OCI-LY7 (cell line): ENCODE measurements at regions of chr7 and their contacts with region 1.

Region 1: DNA sequence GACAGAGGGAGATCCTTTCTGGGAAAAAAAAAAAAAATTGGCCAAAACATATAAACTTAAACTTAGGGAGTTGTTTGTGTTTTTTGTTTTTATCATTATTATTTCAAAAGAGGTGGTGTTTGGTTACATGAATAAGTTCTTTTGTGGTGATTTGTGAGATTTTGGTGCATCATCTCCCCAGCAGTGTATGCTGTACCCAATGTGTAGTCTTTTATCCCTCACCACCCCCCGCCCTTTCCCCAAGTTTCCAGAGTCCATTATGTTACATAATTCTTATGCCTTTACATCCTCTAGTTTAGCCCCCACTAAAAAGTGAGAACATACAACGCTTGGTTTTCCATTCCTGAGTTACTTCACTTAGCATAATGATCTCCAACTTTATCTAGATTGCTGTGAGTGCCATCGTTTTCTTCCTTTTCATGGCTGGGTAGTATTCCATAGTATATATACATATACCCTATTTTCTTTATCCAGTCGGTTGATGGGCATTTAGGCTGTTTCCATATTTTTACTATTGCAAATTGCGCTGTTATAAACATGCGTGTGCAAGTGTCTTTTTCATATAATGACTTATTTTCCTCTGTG is 148.1 kb upstream of the ZNF92 start:
- DNase-seq: no peak
- H3K4me3 ChIP-seq: no peak overlapping the region
- H3K27ac ChIP-seq: no peak overlapping the region
- H3K4me1 ChIP-seq: peaks cover 3% of the 10 kb centered on the region
- CTCF ChIP-seq: no peak

Region 2: DNA sequence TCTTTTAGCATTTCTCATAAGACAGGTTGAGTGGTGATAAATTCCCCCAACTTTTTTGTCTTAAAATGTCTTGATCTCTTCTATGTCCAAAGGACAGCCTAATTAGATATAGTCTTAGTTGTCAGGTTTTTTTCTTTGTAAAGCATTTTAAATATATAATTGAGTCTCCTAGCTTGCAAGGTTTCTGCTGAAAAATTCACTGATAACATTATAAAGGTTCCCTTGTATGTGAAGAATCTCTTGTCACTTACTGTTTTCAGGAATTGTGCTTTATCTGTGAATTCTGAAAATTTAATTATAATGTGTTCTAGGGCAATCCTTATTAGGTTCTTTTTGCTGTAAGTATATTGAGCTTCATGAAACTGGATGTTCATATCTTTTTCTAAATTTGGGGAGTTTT is 51.3 kb after region 1 on chr7:
- CTCF ChIA-PET with region 1: no interaction called
- POLR2A ChIA-PET with region 1: no interaction called
- intact Hi-C with region 1: loop called (anchors 10 kb)
- DNase-seq: no peak
- H3K4me3 ChIP-seq: no peak overlapping the region
- H3K27ac ChIP-seq: no peak overlapping the region
- H3K4me1 ChIP-seq: no peaks in the 10 kb centered on the region
- CTCF ChIP-seq: no peak